ENCODE measurements at regions of chr16 and their contacts with region 1.

Region 1: DNA sequence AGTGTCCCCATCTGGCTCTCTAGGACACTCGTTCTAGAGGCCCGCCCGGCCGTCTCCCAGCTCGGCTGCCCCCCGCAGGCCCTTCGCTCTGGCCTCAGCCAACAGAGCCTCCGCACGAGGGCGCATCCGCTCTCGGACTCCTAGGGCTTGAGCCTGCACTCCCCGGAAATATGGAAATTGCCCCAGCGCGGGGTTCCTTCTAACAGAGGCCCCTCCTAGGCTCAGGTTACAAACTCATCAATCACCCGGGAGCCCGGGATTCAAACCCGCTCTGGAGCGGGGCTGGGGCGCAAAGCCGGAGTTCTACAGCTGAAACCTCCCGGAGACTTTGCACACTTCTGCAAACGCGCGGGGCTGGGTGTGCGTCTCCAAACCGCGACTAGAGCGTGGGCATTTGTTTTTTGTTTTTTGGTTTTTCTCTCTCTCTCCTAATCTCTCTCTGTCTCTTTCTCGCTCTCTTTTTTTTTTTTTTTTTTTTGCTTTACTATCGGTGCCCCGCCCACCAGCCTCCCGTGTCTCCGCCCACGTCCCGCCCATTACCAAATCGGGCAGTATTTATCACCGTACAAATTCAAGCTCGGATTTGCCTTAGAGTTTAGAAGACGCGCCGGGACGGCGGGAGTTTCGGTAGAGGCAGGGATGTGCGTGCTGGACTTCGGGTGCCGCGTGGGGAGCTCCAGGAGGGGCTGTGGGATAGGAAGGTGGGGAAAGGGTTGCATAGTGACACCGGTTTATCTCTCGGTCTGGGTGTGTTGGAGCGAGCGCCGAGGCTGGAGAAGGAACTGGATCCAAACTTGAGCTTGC is 2.4 kb upstream of the FOXL1 start:
- DNase-seq: peak; percentile 94 to 96
- ATAC-seq: peak; percentile 83
- H3K4me3 ChIP-seq: peak overlapping the region; percentile 28 to 52
- H3K27ac ChIP-seq: peak overlapping the region; percentile 96 to 98
- H3K4me1 ChIP-seq: no peaks in the 10 kb centered on the region
- H3K27me3 ChIP-seq: no peaks in the 10 kb centered on the region

Region 2: DNA sequence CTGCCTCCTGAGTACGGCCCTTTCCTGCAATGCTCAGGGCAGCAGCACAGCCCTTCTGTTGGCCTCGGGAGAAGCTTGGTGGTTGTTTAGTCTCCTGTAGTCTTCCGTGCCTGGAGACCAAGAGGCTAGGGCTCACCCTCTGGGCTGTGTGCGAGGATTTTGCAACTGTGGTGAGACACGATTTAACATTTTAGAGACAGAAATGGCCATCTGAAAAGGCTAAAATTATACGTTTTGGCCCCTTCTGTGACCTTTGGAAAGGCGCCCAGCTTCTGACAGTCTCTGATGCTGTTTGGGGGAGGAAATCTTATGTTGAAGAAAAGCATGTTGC is 35.5 kb after region 1 on chr16:
- intact Hi-C with region 1: loop called (anchors 5 kb)
- DNase-seq: peak in 1 of 2 donors; percentile 73
- ATAC-seq: no peak
- H3K4me3 ChIP-seq: no peak overlapping the region
- H3K27ac ChIP-seq: peak overlapping the region in 1 of 2 donors; percentile 86
- H3K4me1 ChIP-seq: peaks cover 5 to 7% of the 10 kb centered on the region in 2 donors
- H3K27me3 ChIP-seq: no peaks in the 10 kb centered on the region

Region 3: DNA sequence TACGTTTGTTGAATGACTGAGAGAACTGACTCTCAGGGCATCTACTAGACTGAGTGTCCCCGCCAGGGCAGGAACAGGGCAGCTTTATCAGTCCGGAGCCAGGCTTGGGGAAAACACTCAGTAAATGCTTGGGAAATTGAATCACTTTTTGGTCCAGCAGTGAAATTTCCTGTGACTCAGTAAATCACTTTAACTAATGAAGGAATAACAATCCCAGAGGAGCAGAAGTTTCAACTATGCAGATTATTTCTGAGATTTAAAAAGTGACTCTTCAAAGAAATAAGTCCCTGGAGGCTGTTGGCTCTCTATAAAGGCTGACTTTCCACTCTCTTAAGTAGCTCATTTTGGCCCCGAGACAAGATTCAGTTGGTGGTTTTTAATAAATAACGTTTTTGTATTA is 104.2 kb after region 1 on chr16:
- intact Hi-C with region 1: loop called (anchors 2 to 5 kb)
- DNase-seq: peak; percentile 69 to 84
- ATAC-seq: peak; percentile 66
- H3K4me3 ChIP-seq: no peak overlapping the region
- H3K27ac ChIP-seq: peak overlapping the region; percentile 58 to 69
- H3K4me1 ChIP-seq: peaks cover 0 to 1% of the 10 kb centered on the region in 2 donors
- H3K27me3 ChIP-seq: no peaks in the 10 kb centered on the region

Region 4: DNA sequence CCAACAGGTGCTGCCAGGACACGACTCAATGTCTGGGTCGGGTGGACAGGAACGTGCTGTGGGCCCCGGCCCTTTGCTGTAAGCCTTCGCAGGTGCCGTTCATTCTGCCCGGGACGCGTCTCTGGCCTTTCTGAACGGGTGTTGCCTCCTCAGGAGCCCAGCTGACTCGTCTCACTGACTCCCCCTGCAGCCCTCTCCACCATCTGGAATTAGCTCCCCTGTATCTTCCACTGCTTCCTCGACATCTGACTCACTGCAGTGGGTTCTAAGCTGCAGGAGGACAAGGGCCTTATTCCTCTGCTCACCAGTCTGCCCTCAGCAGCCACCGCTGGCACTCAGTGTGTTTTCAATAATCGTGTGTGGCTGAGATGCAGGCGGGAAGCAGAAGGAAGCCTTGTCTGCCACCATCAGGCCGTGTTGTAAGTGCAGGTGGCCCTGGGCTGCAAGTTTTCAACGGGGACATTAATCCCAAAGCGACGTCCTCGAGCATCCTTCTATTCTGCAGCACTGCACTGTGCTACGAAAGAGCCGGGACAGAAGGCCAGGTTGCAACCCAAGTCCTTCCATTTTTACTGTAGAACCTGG is 258.6 kb after region 1 on chr16:
- intact Hi-C with region 1: loop called in 1 of 2 experiments (anchors 10 kb)
- DNase-seq: peak; percentile 47 to 65
- ATAC-seq: no peak
- H3K4me3 ChIP-seq: no peak overlapping the region
- H3K27ac ChIP-seq: no peak overlapping the region
- H3K4me1 ChIP-seq: no peaks in the 10 kb centered on the region
- H3K27me3 ChIP-seq: no peaks in the 10 kb centered on the region

Region 5: GRCh38 chr16:87062569-87063442 is 486.9 kb after region 1 on chr16:
- intact Hi-C with region 1: loop called in 1 of 2 experiments (anchors 2 kb)
- DNase-seq: peak; percentile 86 to 92
- ATAC-seq: peak; percentile 91
- H3K4me3 ChIP-seq: no peak overlapping the region
- H3K27ac ChIP-seq: peak overlapping the region in 1 of 2 donors; percentile 45
- H3K4me1 ChIP-seq: no peaks in the 10 kb centered on the region
- H3K27me3 ChIP-seq: no peaks in the 10 kb centered on the region